Prostate gland (tissue), 2 donors: ENCODE measurements at regions of chr14 and their contacts with region 1.

Region 1: DNA sequence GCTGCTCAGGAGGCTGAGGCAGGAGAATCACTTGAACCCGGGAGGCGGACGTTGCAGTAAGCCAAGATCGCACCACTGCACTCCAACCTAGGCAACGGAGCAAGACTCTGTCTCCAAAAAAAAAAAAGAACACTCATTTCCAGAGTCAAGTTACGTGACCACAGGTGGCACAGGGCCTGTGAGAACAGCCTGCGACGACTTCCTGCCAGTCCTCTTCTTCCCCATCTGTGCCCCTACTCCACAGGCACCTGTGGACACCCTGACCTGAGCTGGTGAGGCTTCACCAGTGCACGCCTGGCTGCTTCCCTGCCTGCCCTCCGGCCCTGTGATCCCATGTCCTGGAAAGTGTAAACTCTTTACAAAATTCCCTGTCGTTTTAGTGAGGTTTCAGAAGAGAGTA is 77.7 kb downstream of the PPP2R5C start:
- DNase-seq: no peak
- H3K4me3 ChIP-seq: no peak overlapping the region
- H3K27ac ChIP-seq: no peak overlapping the region
- H3K4me1 ChIP-seq: peaks cover 3% of the 10 kb centered on the region
- H3K27me3 ChIP-seq: no peaks in the 10 kb centered on the region
- CTCF ChIP-seq: no peak
- POLR2A ChIP-seq: no peak

Region 2: GRCh38 chr14:101774006-101774795 is 65.0 kb before region 1 on chr14:
- intact Hi-C with region 1: loop called (anchors 5 kb)
- DNase-seq: no peak
- H3K4me3 ChIP-seq: no peak overlapping the region
- H3K27ac ChIP-seq: no peak overlapping the region
- H3K4me1 ChIP-seq: no peaks in the 10 kb centered on the region
- H3K27me3 ChIP-seq: no peaks in the 10 kb centered on the region
- CTCF ChIP-seq: no peak
- POLR2A ChIP-seq: no peak

Region 3: GRCh38 chr14:102008891-102009290 is 169.7 kb after region 1 on chr14:
- intact Hi-C with region 1: no loop called
- DNase-seq: no peak
- H3K4me3 ChIP-seq: no peak overlapping the region
- H3K27ac ChIP-seq: no peak overlapping the region
- H3K4me1 ChIP-seq: no peaks in the 10 kb centered on the region
- H3K27me3 ChIP-seq: no peaks in the 10 kb centered on the region
- CTCF ChIP-seq: no peak
- POLR2A ChIP-seq: no peak